Left colon (tissue), 2 donors: ENCODE measurements at regions of chr16 and their contacts with region 1.

Region 1: GRCh38 chr16:83826146-83826913 is 18.6 kb downstream of the HSBP1 start:
- DNase-seq: peak; percentile 71 to 88
- ATAC-seq: peak; percentile 96

Region 2: GRCh38 chr16:83903751-83904150 is 77.4 kb after region 1 on chr16:
- intact Hi-C with region 1: loop called in 1 of 2 experiments (anchors 10 kb)
- DNase-seq: no peak
- ATAC-seq: no peak

Region 3: GRCh38 chr16:83926726-83927397 is 100.5 kb after region 1 on chr16:
- intact Hi-C with region 1: no loop called
- DNase-seq: peak; percentile 61 to 80
- ATAC-seq: peak; percentile 89